CD4-positive, alpha-beta memory T cell (primary cell): ENCODE measurements at regions of chr5 and their contacts with region 1.

Region 1: DNA sequence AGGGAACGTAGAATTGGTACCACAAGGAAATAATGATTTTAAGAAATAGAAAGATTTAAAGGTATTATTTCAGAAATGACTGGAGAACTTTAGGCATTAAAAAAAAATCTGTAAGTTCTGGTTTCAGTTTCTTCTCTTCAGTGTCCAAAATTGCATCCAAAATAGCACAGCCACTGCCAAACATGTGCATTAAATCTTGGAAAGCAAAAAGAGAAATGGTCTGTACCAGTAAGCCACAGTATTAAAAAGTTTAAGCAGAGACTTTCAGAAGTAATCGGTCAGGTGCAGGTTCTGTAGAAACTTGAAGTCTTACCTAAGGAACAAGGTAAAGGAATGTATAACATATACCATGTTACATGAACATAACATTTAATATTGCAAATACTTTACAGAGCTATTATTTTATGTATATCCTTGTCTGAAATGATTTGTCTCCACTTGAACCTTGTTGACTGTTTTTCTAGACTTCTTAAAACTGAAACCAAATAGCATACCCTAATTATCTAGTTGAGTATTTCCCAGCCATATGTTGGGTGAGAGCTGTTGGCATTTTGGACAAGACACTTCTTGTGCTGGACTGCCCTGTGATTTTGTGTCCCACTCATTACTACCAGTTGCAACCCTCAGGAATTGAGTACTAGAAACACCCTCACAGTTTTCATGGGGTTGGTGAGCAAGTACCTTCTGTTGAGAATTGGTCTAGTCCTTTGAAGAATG is 32.1 kb downstream of the NIPBL start:
- DNase-seq: no peak
- H3K4me3 ChIP-seq: no peak overlapping the region
- H3K4me3 Mint-ChIP-seq: peak overlapping the region in 3 of 8 donors; percentile 5 to 44 (median 39)
- H3K27ac ChIP-seq: no peak overlapping the region
- H3K27ac Mint-ChIP-seq: peak overlapping the region in 2 of 7 donors; percentile 17 to 19
- H3K4me1 ChIP-seq: peaks cover 58% of the 10 kb centered on the region
- H3K4me1 Mint-ChIP-seq: peaks cover 13 to 51% (median 30%) of the 10 kb centered on the region in 4 donors
- H3K27me3 ChIP-seq: no peaks in the 10 kb centered on the region
- H3K27me3 Mint-ChIP-seq: no peaks in the 10 kb centered on the region

Region 2: DNA sequence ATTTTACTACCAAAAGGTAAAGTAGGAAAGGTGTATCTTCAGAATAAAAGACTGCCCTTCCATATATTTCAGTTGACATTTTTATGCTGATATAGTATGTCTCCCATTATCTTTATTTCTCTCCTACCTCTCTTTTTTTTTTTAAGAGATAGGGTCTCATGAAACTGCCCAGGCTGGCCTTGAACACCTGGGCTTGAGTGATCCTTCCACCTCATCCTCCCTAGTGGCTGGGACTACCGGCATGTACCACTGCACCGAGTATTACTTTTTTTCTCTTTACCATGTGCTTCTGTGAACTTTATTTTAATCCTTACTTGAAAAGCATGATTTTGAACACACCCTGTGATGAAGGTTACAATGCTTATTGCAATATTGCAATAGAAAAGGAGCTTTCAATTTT is 10.5 kb after region 1 on chr5:
- CTCF ChIA-PET with region 1: no interaction called
- POLR2A ChIA-PET with region 1: interaction called, 3 read pairs
- intact Hi-C with region 1: loop called (anchors 1 kb)
- DNase-seq: no peak
- H3K4me3 ChIP-seq: no peak overlapping the region
- H3K4me3 Mint-ChIP-seq: peak overlapping the region in 5 of 8 donors; percentile 4 to 66 (median 20)
- H3K27ac ChIP-seq: no peak overlapping the region
- H3K27ac Mint-ChIP-seq: peak overlapping the region in 3 of 7 donors; percentile 9 to 28 (median 13)
- H3K4me1 ChIP-seq: peaks cover 21% of the 10 kb centered on the region
- H3K4me1 Mint-ChIP-seq: peaks cover 27 to 76% (median 42%) of the 10 kb centered on the region in 4 donors
- H3K27me3 ChIP-seq: no peaks in the 10 kb centered on the region
- H3K27me3 Mint-ChIP-seq: no peaks in the 10 kb centered on the region